Activated T-helper 2 cell treated with anti-CD3 and anti-CD28 coated beads, Interferon-gamma antibody, Interleukin-2, Interleukin-4, amounts not matched to agents 10 μg/mL and 5 μg/mL and 100 μg/mL, durations not matched to agents 14 hours and 24 hours and 36 hours (primary cell): ENCODE measurements at regions of chr5 and their contacts with region 1.

Region 1: GRCh38 chr5:123450640-123451039 is 27.4 kb upstream of the CEP120 start:
- DNase-seq: no peak
- H3K4me3 Mint-ChIP-seq: no peak overlapping the region
- H3K27ac Mint-ChIP-seq: no peak overlapping the region
- H3K4me1 Mint-ChIP-seq: peaks cover 51% of the 10 kb centered on the region
- H3K27me3 Mint-ChIP-seq: peaks cover 5% of the 10 kb centered on the region

Region 2: GRCh38 chr5:123059455-123059854 is 391.2 kb before region 1 on chr5:
- intact Hi-C with region 1: no loop called
- DNase-seq: no peak
- H3K4me3 Mint-ChIP-seq: no peak overlapping the region
- H3K27ac Mint-ChIP-seq: no peak overlapping the region
- H3K4me1 Mint-ChIP-seq: no peaks in the 10 kb centered on the region
- H3K27me3 Mint-ChIP-seq: peaks cover 6% of the 10 kb centered on the region

Region 3: DNA sequence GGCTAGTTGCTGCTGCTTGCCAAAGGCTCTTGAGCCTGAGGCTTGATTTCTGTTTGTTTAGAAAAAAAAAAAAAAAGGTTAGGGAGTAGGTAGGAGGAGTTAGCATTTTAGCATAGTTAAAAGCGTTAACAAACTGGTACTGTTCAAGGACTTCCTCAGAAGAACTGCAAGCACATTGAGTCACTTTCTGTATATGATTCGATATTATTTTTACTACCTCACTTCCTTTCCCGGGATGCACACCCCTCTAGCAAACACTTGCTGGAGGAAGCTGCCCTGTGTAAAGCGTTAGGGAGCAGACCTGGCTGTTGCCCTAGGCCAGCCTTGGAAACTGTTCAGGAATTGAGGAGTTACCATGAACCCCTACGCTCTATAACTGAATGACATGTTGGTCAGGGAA is 11.7 kb before region 1 on chr5:
- intact Hi-C with region 1: loop called (anchors 1 kb)
- DNase-seq: peak; percentile 29
- H3K4me3 Mint-ChIP-seq: no peak overlapping the region
- H3K27ac Mint-ChIP-seq: peak overlapping the region; percentile 81
- H3K4me1 Mint-ChIP-seq: peaks cover 33% of the 10 kb centered on the region
- H3K27me3 Mint-ChIP-seq: no peaks in the 10 kb centered on the region

Region 4: GRCh38 chr5:123545506-123545905 is 94.9 kb after region 1 on chr5:
- intact Hi-C with region 1: loop called (anchors 5 kb)
- DNase-seq: no peak
- H3K4me3 Mint-ChIP-seq: no peak overlapping the region
- H3K27ac Mint-ChIP-seq: no peak overlapping the region
- H3K4me1 Mint-ChIP-seq: peaks cover 36% of the 10 kb centered on the region
- H3K27me3 Mint-ChIP-seq: no peaks in the 10 kb centered on the region